ENCODE measurements at regions of chr10 and their contacts with region 1.

Region 1: GRCh38 chr10:8520382-8520781 is 465.9 kb downstream of the GATA3 start:
- DNase-seq: no peak
- H3K4me3 ChIP-seq: no peak overlapping the region
- H3K27ac ChIP-seq: no peak overlapping the region
- H3K4me1 ChIP-seq: no peaks in the 10 kb centered on the region
- H3K27me3 ChIP-seq: no peaks in the 10 kb centered on the region
- CTCF ChIP-seq: peak; percentile 33 to 36

Region 2: DNA sequence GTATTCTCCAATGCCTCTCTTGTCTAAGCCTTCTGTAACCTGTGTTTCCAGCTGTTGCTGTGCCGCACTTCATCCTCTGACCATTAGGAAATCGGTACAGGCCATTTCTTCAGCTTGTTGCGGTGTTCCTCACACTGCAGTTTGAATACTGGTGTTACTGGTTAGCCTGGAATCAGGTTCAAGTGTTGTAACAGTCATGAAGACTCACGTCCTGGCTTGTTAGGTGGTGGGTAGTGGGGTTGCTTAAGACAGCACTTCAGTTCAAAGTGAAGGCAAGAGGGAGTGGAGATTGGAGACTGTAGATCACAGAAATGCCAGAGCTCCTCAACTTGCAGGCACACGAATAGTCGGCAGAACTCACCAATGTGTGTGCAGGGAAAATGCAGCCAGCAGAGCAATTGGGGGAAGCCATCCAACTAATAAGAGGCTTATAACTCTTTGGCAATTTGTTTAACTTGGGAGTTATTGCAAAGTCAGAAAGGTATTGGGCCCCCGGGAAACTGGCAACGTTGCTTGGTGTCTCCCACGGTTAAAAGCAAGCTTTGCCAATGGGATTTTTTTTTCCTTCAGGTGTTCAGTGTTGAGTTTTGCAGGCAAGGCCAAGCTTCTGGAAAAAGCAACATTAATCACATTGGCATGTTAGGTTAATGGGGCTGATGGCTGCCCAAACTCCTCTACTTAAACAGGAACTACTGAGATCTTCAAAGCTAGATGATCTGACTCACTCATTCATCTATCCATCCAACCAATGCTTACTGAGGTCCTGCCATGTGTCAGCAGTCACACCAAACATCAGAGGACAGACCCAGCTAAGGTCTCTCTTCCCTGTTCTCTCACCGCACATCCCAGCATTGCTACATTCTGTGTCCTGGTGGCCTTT is 85.0 kb before region 1 on chr10:
- CTCF ChIA-PET with region 1: no interaction called
- dilution Hi-C with region 1: no loop called
- in situ Hi-C with region 1: no loop called
- intact Hi-C with region 1: no loop called
- DNase-seq: peak; percentile 96
- H3K4me3 ChIP-seq: no peak overlapping the region
- H3K27ac ChIP-seq: peak overlapping the region; percentile 31
- H3K4me1 ChIP-seq: peaks cover 30% of the 10 kb centered on the region
- H3K27me3 ChIP-seq: no peaks in the 10 kb centered on the region
- CTCF ChIP-seq: peak; percentile 21 to 25

Region 3: DNA sequence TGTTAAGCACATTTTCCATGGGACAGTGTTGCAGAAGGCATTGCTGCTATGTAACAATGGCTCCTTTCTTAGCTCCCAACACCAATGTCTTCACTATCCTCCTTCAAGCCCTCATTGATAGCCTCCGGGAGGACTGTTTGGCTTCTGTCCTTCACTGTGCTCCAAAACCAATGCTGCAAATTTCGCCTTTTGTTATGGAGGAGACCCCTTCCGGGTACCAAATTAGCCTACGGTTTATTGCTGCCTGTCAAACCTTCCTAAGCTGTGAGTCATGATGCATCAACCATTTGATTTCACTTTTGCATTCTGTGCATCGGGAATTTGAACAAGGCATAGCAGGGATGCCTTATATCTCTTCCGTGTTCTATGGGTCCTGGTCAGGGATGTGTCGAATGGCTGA is 33.0 kb before region 1 on chr10:
- CTCF ChIA-PET with region 1: no interaction called
- dilution Hi-C with region 1: no loop called
- in situ Hi-C with region 1: no loop called
- intact Hi-C with region 1: no loop called
- DNase-seq: no peak
- H3K4me3 ChIP-seq: no peak overlapping the region
- H3K27ac ChIP-seq: no peak overlapping the region
- H3K4me1 ChIP-seq: no peaks in the 10 kb centered on the region
- H3K27me3 ChIP-seq: no peaks in the 10 kb centered on the region
- CTCF ChIP-seq: no peak

Region 4: GRCh38 chr10:8568401-8568800 is 48.0 kb after region 1 on chr10:
- CTCF ChIA-PET with region 1: no interaction called
- dilution Hi-C with region 1: loop called (anchors 5 kb)
- in situ Hi-C with region 1: no loop called
- intact Hi-C with region 1: no loop called
- DNase-seq: peak; percentile 56
- H3K4me3 ChIP-seq: no peak overlapping the region
- H3K27ac ChIP-seq: no peak overlapping the region
- H3K4me1 ChIP-seq: no peaks in the 10 kb centered on the region
- H3K27me3 ChIP-seq: no peaks in the 10 kb centered on the region
- CTCF ChIP-seq: no peak